PC-3 (cell line): ENCODE measurements at regions of chr18 and their contacts with region 1.

Region 1: GRCh38 chr18:62938487-62938886 is 223.1 kb downstream of the PHLPP1 start:
- DNase-seq: no peak
- ATAC-seq: no peak
- H3K4me3 ChIP-seq: no peak overlapping the region
- H3K27ac ChIP-seq: peak overlapping the region; percentile 65
- H3K4me1 ChIP-seq: peaks cover 42% of the 10 kb centered on the region
- H3K27me3 ChIP-seq: no peaks in the 10 kb centered on the region
- CTCF ChIP-seq: no peak

Region 2: DNA sequence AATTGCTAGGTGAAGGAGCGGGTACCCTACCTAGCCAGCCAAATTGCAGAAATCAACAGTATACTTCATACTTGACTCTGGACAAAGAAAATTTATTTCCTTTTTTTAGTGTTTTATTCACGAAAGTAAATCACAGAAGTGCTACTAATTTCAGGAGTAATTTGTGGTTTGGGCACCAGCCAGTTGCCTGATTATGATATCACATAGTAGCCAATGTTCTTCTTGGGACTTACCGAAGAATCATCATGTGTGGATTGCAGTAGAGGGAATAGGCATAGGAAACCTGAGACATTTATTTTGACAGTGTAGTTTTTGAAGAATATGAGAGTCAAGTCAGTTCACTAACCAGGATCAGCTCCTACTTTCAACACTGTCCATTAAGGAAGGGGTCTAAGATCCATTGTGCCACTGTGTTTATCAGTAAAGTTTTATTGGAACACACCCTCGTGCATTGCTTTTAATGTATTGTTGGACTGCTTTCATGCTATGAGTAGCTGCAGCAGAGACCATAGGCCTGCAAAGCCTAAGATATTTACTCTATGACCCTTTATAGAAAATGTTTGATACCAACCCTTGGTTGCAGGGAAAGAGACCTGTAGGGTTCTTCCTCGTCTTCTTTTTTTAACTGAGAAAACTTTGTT is 581.3 kb before region 1 on chr18:
- CTCF ChIA-PET with region 1: no interaction called
- POLR2A ChIA-PET with region 1: no interaction called
- intact Hi-C with region 1: no loop called
- DNase-seq: no peak
- ATAC-seq: no peak
- H3K4me3 ChIP-seq: no peak overlapping the region
- H3K27ac ChIP-seq: no peak overlapping the region
- H3K4me1 ChIP-seq: no peaks in the 10 kb centered on the region
- H3K27me3 ChIP-seq: no peaks in the 10 kb centered on the region
- CTCF ChIP-seq: no peak

Region 3: GRCh38 chr18:62881509-62882016 is 56.9 kb before region 1 on chr18:
- CTCF ChIA-PET with region 1: no interaction called
- POLR2A ChIA-PET with region 1: no interaction called
- intact Hi-C with region 1: loop called (anchors 5 kb)
- DNase-seq: peak; percentile 92
- ATAC-seq: peak; percentile 88
- H3K4me3 ChIP-seq: no peak overlapping the region
- H3K27ac ChIP-seq: peak overlapping the region; percentile 44
- H3K4me1 ChIP-seq: peaks cover 44% of the 10 kb centered on the region
- H3K27me3 ChIP-seq: no peaks in the 10 kb centered on the region
- CTCF ChIP-seq: no peak

Region 4: DNA sequence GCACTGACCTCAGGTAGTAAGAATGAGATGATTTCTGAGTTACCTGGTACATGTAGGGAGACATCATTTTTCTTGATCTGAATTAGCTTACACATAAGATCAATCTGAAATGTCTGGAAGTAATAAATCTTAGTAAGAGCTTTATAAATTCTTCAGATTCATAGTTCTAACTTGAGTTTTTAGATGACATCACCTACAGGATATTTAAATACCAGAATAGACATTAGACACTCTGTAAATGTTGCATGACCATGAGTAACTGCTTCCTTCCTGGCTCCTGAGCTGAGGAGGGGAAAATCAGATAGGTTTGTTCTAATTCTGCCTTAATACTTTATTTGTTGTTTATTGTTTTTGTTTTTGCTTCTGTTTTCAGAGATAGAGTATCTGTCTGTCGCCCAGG is 41.3 kb before region 1 on chr18:
- CTCF ChIA-PET with region 1: no interaction called
- POLR2A ChIA-PET with region 1: interaction called, 6 read pairs
- intact Hi-C with region 1: loop called (anchors 2 kb)
- DNase-seq: peak; percentile 68
- ATAC-seq: peak; percentile 99
- H3K4me3 ChIP-seq: no peak overlapping the region
- H3K27ac ChIP-seq: peak overlapping the region; percentile 58
- H3K4me1 ChIP-seq: peaks cover 17% of the 10 kb centered on the region
- H3K27me3 ChIP-seq: no peaks in the 10 kb centered on the region
- CTCF ChIP-seq: no peak

Region 5: DNA sequence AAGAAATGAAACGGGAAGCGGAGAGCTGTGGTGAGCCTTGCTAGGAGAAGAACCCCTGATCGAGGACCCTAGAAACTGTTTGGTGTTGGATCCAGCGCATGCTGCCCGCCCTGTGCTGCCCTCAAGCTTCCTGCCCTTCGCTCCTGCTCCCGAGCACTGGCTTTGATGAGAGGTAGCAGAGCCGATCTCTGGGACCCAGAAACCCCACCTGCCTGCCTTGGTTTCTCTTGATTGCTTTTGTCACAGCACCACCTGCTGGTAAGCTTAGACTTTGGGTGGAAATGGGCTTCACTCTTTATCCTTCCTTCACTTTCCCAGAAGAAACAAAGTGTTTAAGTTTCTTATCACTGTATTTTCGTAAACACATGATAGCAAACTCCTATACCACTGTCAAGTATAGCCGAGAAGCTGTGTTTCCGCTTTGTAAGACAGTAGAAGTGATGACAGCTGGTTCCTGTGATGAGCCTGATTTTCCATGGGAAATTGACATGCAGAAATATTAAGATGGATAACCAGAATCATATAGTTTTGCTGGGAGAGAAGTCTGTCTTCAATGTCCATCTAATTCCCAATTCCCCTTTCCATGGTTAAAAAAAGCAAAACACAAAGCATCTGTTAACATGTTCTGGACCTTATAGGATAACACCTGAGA is 44.2 kb after region 1 on chr18:
- CTCF ChIA-PET with region 1: no interaction called
- POLR2A ChIA-PET with region 1: no interaction called
- intact Hi-C with region 1: loop called (anchors 5 kb)
- DNase-seq: peak; percentile 62
- ATAC-seq: peak; percentile 59
- H3K4me3 ChIP-seq: no peak overlapping the region
- H3K27ac ChIP-seq: no peak overlapping the region
- H3K4me1 ChIP-seq: peaks cover 15% of the 10 kb centered on the region
- H3K27me3 ChIP-seq: no peaks in the 10 kb centered on the region
- CTCF ChIP-seq: peak; percentile 93